IMR-90 (cell line): ENCODE measurements at regions of chr1 and their contacts with region 1.

Region 1: GRCh38 chr1:63674238-63674864 is 81.1 kb downstream of the PGM1 start:
- DNase-seq: peak; percentile 93
- ATAC-seq: peak; percentile 99
- H3K4me3 ChIP-seq: no peak overlapping the region
- H3K27ac ChIP-seq: no peak overlapping the region
- H3K4me1 ChIP-seq: no peaks in the 10 kb centered on the region
- H3K27me3 ChIP-seq: no peaks in the 10 kb centered on the region
- CTCF ChIP-seq: peak; percentile 84
- POLR2A ChIP-seq: no peak
- RAD21 ChIP-seq: peak; percentile 83

Region 2: DNA sequence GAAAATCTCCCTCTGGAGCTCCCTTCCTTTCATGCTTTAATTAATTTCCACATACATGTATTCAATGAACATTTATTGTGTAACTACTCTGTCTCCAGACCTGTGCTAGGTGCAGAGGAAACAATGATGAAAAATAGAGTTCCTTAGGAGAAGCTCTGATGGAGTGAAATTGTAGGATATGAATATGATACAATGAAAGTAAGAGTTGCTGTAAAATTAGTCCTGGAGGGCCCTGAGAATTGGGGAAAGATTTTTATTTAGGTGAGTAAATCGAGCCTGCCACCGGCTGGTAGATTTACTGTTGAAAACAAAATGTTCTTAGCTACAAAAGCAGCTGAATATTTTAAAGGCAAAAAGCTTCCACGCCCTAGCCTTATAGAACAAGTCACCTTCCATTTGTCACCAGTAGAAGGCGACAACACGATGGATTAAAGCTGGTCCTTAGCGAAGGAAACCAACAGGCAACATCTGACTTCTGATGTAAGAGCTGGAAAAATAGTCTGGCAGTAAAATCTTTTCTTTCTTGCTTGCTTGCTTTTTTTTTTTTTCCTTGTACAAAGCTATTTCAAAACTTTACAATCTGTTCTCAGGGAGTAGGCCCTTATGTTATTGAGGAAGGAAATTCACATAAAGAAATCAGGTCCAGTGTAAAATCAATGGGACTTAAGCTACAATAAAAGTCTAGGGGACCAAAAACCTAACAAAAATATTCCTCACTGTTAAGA is 17.5 kb after region 1 on chr1:
- CTCF ChIA-PET with region 1: interaction called, 16 read pairs
- POLR2A ChIA-PET with region 1: no interaction called
- dilution Hi-C with region 1: no loop called
- in situ Hi-C with region 1: no loop called
- intact Hi-C with region 1: no loop called
- DNase-seq: peak; percentile 94
- ATAC-seq: peak; percentile 89
- H3K4me3 ChIP-seq: no peak overlapping the region
- H3K27ac ChIP-seq: no peak overlapping the region
- H3K4me1 ChIP-seq: peaks cover 2% of the 10 kb centered on the region; the same call in 1 of the 2 replicates
- H3K27me3 ChIP-seq: no peaks in the 10 kb centered on the region; the same call in 1 of the 2 replicates
- CTCF ChIP-seq: peak; percentile 84
- POLR2A ChIP-seq: no peak
- RAD21 ChIP-seq: peak; percentile 87

Region 3: GRCh38 chr1:64147759-64148158 is 473.4 kb after region 1 on chr1:
- CTCF ChIA-PET with region 1: interaction called, 3 read pairs
- POLR2A ChIA-PET with region 1: no interaction called
- dilution Hi-C with region 1: no loop called
- in situ Hi-C with region 1: loop called (anchors 10 kb)
- intact Hi-C with region 1: no loop called
- DNase-seq: no peak
- ATAC-seq: peak; percentile 27; the same call in 1 of the 2 replicates
- H3K4me3 ChIP-seq: no peak overlapping the region
- H3K27ac ChIP-seq: no peak overlapping the region
- H3K4me1 ChIP-seq: no peaks in the 10 kb centered on the region
- H3K27me3 ChIP-seq: no peaks in the 10 kb centered on the region
- CTCF ChIP-seq: no peak
- POLR2A ChIP-seq: no peak
- RAD21 ChIP-seq: no peak